B cell (primary cell): ENCODE measurements at regions of chr1 and their contacts with region 1.

Region 1: DNA sequence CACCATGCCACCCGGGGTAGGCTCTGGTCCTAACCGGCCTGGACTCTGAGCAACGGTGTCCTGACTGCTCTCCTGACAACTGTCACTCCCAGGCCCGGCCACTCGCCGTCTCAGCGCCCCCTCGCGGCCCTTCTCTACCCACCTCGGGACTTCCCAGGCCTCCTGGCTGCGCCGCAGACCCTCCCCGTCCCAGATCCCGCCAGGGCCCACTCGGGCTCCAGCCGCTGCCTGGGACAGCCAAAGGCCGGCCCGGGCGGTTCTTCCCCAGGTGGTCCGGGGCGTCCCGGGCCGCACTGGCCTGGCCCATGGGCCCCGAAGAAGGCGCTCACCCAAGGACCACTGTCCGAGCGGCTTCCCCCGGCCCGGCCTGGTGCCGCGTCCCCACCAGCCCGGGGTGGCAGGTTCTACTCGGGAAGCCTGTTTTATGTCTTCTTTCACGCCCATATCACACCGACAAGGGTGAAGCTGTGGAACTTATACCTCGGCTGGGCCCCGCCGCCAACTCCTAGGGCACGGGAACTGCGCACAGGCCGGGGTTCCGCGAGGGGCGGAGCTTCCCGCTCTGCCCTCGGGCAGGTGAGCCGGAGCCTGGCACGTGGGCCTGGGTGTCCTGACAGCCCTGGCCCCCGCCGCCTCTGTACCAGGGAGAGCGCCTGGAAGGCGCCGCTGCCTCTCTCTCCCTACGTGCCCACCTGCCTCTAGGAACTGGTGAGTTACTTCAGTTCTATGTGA is 138.3 kb downstream of the TTLL7 start:
- DNase-seq: peak; percentile 80
- ATAC-seq: peak; percentile 85
- H3K4me3 ChIP-seq: peak overlapping the region; percentile 21 to 86 (median 75)
- H3K4me3 Mint-ChIP-seq: peak overlapping the region; percentile 84
- H3K27ac ChIP-seq: peak overlapping the region; percentile 73 to 94
- H3K27ac Mint-ChIP-seq: peak overlapping the region; percentile 84
- H3K4me1 ChIP-seq: peaks cover 2 to 8% of the 10 kb centered on the region in 2 donors
- H3K4me1 Mint-ChIP-seq: peaks cover 9% of the 10 kb centered on the region
- H3K27me3 ChIP-seq: no peaks in the 10 kb centered on the region
- H3K27me3 Mint-ChIP-seq: no peaks in the 10 kb centered on the region
- CTCF ChIP-seq: peak; percentile 86

Region 2: DNA sequence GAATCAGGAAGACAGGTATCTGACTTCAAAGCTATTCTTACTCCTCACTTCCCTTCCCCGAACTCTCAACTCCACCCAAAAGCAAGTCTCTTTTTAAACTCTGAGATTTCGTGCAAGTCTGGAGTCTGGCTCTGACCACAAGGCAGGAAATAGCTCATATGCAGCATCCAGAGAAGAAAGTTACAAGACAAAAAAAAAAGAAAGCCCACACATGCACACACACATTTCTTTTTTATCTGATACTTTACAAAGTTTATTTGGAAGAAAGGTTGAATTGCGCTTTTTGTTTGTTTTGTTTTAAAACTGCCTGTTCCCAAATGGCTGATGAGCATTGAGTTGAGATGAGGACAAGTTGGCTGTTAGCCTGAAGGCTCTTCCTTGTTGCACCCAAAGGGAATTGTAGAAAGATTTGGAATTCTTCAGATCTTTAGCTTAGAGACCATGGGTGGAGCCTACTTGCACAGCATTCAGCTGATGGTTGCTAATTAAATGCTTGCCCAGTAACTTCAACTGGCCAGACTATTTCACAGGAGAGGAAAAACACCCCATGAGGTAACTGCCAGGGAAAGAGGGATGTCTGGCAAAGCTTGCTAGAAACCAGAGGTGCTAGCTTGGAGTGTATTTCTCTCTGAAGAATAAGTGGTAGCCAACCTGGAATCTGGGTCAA is 352.0 kb before region 1 on chr1:
- CTCF ChIA-PET with region 1: no interaction called
- POLR2A ChIA-PET with region 1: no interaction called
- intact Hi-C with region 1: loop called (anchors 10 kb)
- DNase-seq: peak; percentile 15
- ATAC-seq: peak; percentile 66
- H3K4me3 ChIP-seq: peak overlapping the region in 1 of 5 experiments; percentile 21
- H3K4me3 Mint-ChIP-seq: peak overlapping the region; percentile 35
- H3K27ac ChIP-seq: peak overlapping the region in 1 of 2 donors; percentile 31
- H3K27ac Mint-ChIP-seq: peak overlapping the region; percentile 50
- H3K4me1 ChIP-seq: peaks cover 7 to 22% of the 10 kb centered on the region in 2 donors
- H3K4me1 Mint-ChIP-seq: peaks cover 23% of the 10 kb centered on the region
- H3K27me3 ChIP-seq: no peaks in the 10 kb centered on the region
- H3K27me3 Mint-ChIP-seq: no peaks in the 10 kb centered on the region
- CTCF ChIP-seq: no peak